ENCODE measurements at regions of chr12 and their contacts with region 1.

Region 1: DNA sequence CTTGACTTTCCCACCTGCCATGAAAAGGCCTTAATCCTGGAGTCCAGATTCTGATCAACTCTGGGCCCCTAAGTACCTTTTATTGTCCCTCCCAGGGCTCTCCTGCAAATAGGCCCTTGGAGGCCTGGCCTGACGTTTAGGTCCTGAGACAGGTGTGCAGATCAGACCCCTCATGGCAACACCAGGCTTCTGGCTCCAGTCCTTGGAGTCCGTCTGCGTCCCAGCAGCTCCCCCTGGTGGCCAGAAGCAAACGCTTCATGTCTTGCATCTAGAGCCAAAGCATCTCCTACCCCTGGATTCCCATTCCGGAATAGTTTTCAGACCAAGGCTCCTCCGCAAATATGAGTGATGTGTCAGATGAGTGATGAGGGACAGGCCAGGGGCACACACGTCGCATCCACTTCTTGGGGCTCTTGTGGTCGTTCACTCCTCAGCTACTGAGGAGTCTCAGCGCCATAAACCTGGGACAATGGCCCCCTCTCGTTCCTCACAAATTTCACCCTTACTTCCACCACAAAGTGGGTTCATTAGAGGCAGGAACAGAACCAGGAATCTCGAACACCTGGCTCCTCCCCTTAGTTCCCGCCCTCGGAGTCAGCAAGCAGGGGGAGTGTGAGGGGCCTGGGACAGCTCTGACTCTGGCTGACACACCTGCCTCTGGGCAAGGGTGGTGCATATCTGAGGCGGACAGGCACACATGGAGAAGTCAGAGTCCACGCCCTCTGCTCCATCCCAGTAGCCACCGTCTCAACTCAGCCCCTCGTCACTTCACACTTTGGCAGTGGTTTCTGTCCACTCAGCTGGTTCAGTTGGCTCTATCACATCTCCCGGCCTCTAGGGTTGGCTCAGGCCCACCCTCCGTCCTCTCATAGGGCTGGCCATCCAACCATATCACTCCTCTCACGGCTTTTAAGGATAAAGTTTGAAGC is 77.9 kb upstream of the PWP1 start:
- DNase-seq: peak; percentile 51
- H3K4me3 ChIP-seq: no peak overlapping the region
- H3K27ac ChIP-seq: no peak overlapping the region
- H3K27me3 ChIP-seq: no peaks in the 10 kb centered on the region
- CTCF ChIP-seq: peak; percentile 96

Region 2: DNA sequence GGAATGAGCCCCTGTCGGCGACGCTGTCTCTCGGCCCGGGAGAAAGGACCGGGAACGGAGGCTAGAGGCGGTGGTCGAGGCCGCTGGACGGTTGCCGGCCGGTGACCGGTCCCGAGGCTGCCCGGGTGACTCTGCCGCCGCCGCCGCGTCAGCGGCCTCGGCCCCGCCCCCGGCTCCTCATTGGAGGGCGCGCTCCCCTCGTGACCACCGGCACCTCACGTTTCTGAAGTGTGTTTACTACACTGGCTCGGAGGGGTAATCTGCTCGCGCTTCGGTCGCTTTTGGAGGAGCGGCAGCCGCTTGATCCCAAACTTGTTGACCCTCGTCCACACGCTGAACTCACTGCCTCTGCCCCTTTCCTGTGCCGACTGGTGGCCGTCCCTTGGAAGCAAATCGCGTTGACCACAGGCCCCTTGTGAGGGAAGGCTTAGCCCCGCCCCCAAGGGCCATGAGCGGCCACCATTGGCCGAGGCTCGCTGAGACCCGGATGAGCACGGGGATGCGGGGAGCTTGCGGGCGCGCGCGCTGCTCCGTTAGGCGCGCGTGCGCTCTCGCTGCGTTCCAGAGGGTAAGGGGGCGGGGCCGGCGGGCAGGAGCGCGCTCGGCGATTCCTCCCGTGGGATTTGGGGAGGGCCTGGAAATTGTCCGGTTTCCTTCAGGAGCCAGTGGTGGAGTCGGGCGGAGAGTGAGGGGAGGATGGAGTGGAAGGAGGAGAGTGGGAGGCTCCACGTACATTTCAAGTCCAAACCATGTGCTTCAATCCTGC is 514.1 kb before region 1 on chr12 and contains the start of gene CRY1:
- CTCF ChIA-PET with region 1: interaction called, 51 read pairs
- POLR2A ChIA-PET with region 1: no interaction called
- DNase-seq: peak; percentile 86
- H3K4me3 ChIP-seq: peak within 1 kb of the TSS; percentile 93
- H3K27ac ChIP-seq: peak within 1 kb of the TSS; percentile 99
- H3K27me3 ChIP-seq: no peaks in the 10 kb centered on the region
- CTCF ChIP-seq: no peak
- polyA plus RNA-seq, gene CRY1: 10.3 and 13.7 TPM in 2 replicates

Region 3: GRCh38 chr12:107126796-107127481 is 480.8 kb before region 1 on chr12:
- CTCF ChIA-PET with region 1: interaction called, 401 read pairs
- POLR2A ChIA-PET with region 1: no interaction called
- DNase-seq: no peak
- H3K4me3 ChIP-seq: no peak overlapping the region
- H3K27ac ChIP-seq: no peak overlapping the region
- H3K27me3 ChIP-seq: peaks cover 5% of the 10 kb centered on the region
- CTCF ChIP-seq: peak; percentile 61

Region 4: GRCh38 chr12:107448198-107448597 is 159.5 kb before region 1 on chr12:
- CTCF ChIA-PET with region 1: interaction called, 10 read pairs
- POLR2A ChIA-PET with region 1: no interaction called
- DNase-seq: no peak
- H3K4me3 ChIP-seq: no peak overlapping the region
- H3K27ac ChIP-seq: no peak overlapping the region
- H3K27me3 ChIP-seq: no peaks in the 10 kb centered on the region
- CTCF ChIP-seq: peak; percentile 58

Region 5: DNA sequence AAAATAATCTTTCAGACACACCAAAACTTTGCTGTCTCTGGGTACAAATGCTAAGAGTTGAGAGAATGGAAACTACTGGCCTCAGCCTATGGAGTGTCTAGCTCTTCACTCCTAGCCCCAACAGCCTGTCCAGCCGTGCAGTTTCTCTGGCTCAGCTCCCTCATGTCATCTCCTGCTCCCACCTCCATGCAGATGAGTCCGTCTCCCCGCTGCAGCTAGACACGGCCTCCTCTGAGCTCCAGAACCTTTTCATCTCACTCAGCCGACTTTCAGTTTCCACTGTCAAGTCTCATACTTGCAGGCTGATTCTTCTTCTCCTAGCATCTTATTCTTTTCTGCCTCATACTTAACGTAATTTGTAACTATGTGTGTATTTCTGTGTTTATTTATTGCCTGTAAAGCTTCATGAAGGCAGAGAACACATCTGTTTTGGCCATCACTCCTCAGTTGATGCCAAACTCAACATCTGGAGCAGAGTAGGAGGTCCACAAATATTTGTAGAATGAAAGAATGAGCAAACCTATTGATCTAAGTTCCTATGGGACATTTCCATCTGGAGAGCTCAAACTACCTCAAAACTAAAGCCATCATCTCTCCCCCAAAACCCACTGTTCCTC is 61.9 kb before region 1 on chr12:
- CTCF ChIA-PET with region 1: interaction called, 12 read pairs
- POLR2A ChIA-PET with region 1: no interaction called
- DNase-seq: peak; percentile 20
- H3K4me3 ChIP-seq: peak overlapping the region; percentile 22; the same call in 1 of the 2 replicates
- H3K27ac ChIP-seq: no peak overlapping the region
- H3K27me3 ChIP-seq: no peaks in the 10 kb centered on the region
- CTCF ChIP-seq: no peak

Region 6: GRCh38 chr12:107584563-107584962 is 23.2 kb before region 1 on chr12:
- CTCF ChIA-PET with region 1: interaction called, 26 read pairs
- POLR2A ChIA-PET with region 1: no interaction called
- DNase-seq: no peak
- H3K4me3 ChIP-seq: no peak overlapping the region
- H3K27ac ChIP-seq: no peak overlapping the region
- H3K27me3 ChIP-seq: no peaks in the 10 kb centered on the region
- CTCF ChIP-seq: no peak

Region 7: GRCh38 chr12:107622005-107622404 is 14.3 kb after region 1 on chr12:
- CTCF ChIA-PET with region 1: interaction called, 26 read pairs
- POLR2A ChIA-PET with region 1: no interaction called
- DNase-seq: no peak
- H3K4me3 ChIP-seq: no peak overlapping the region
- H3K27ac ChIP-seq: no peak overlapping the region
- H3K27me3 ChIP-seq: no peaks in the 10 kb centered on the region
- CTCF ChIP-seq: peak; percentile 51

Measured in AG04450 (cell line).